CD8-positive, alpha-beta T cell (primary cell): ENCODE measurements at regions of chrX and their contacts with region 1.

Region 1: GRCh38 chrX:71532753-71533425 is at the start of gene OGT:
- DNase-seq: peak; percentile 84 to 98 (median 93)
- ATAC-seq: peak; percentile 70
- H3K4me3 ChIP-seq: peak within 1 kb of the TSS; percentile 71 to 90
- H3K4me3 Mint-ChIP-seq: peak within 1 kb of the TSS; percentile 98
- H3K27ac ChIP-seq: peak within 1 kb of the TSS; percentile 92 to 98
- H3K27ac Mint-ChIP-seq: peak within 1 kb of the TSS; percentile 98
- H3K4me1 ChIP-seq: peaks cover 15% of the 10 kb centered on the region
- H3K4me1 Mint-ChIP-seq: peaks cover 36% of the 10 kb centered on the region
- H3K27me3 ChIP-seq: no peaks in the 10 kb centered on the region
- H3K27me3 Mint-ChIP-seq: no peaks in the 10 kb centered on the region
- CTCF ChIP-seq: no peak
- total RNA-seq, gene OGT: 295 to 297 TPM

Region 2: DNA sequence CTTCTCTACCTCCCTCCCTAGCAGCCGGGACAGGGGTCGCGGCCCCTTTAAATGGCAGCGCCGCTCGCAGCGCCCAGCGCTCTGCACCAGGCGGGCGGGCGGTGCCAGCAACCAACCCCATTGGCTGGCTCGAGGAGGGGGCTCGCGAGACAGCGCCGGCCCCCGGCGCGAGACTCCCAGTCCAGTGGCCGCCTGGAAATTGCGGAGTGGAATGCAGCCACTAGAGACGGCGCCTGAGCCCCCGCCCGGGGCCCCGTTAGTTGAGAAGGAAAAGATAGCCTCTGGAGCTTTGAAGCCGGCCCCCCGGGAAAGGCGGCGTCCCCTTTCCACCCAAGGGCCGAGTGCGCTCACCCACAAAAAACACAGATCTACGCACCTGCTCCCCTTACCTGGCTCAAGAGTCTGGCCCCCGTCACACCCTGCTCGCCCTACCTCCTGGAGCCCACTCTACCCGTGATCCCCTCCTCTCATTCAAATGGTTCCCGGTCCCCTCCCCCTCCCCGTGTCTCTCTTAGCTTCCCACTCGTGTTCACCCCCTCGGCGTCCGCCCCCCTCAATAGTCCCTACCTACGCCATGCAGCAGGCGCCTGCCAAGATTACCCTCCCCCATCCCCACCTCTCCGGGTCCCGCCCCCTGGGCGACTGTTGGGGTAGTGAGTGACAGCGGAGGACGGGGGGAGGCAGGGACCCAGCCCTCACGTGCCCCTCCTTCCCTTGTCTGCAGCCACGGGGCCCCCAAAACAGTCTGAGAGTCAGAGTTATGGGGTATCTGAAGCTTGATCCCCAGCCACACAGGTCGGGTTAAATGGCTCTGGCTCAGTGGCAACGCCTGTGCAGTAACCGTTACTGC is 278.6 kb before region 1 on chrX and contains the start of gene ZMYM3:
- CTCF ChIA-PET with region 1: no interaction called
- POLR2A ChIA-PET with region 1: interaction called, 5 read pairs
- intact Hi-C with region 1: loop called in 1 of 2 experiments (anchors 10 kb)
- DNase-seq: peak; percentile 50 to 91 (median 80)
- ATAC-seq: peak; percentile 79
- H3K4me3 ChIP-seq: peak within 1 kb of the TSS; percentile 79 to 84
- H3K4me3 Mint-ChIP-seq: peak within 1 kb of the TSS; percentile 94
- H3K27ac ChIP-seq: peak within 1 kb of the TSS; percentile 85 to 87
- H3K27ac Mint-ChIP-seq: peak within 1 kb of the TSS; percentile 92
- H3K4me1 ChIP-seq: peaks cover 28% of the 10 kb centered on the region
- H3K4me1 Mint-ChIP-seq: peaks cover 26% of the 10 kb centered on the region
- H3K27me3 ChIP-seq: no peaks in the 10 kb centered on the region
- H3K27me3 Mint-ChIP-seq: no peaks in the 10 kb centered on the region
- CTCF ChIP-seq: no peak
- total RNA-seq, gene ZMYM3: 12.2 to 13.2 TPM

Region 3: GRCh38 chrX:71365876-71366673 is 166.8 kb before region 1 on chrX and contains the start of gene TAF1:
- CTCF ChIA-PET with region 1: no interaction called
- POLR2A ChIA-PET with region 1: interaction called, 35 read pairs
- intact Hi-C with region 1: loop called in 1 of 2 experiments (anchors 1 kb)
- DNase-seq: peak; percentile 76 to 97 (median 88)
- ATAC-seq: peak; percentile 86
- H3K4me3 ChIP-seq: peak within 1 kb of the TSS; percentile 85 to 95
- H3K4me3 Mint-ChIP-seq: peak within 1 kb of the TSS; percentile 98
- H3K27ac ChIP-seq: peak within 1 kb of the TSS; percentile 87 to 91
- H3K27ac Mint-ChIP-seq: peak within 1 kb of the TSS; percentile 100
- H3K4me1 ChIP-seq: peaks cover 14% of the 10 kb centered on the region
- H3K4me1 Mint-ChIP-seq: peaks cover 28% of the 10 kb centered on the region
- H3K27me3 ChIP-seq: no peaks in the 10 kb centered on the region
- H3K27me3 Mint-ChIP-seq: no peaks in the 10 kb centered on the region
- CTCF ChIP-seq: no peak
- total RNA-seq, gene TAF1: 48.2 to 61.3 TPM

Region 4: DNA sequence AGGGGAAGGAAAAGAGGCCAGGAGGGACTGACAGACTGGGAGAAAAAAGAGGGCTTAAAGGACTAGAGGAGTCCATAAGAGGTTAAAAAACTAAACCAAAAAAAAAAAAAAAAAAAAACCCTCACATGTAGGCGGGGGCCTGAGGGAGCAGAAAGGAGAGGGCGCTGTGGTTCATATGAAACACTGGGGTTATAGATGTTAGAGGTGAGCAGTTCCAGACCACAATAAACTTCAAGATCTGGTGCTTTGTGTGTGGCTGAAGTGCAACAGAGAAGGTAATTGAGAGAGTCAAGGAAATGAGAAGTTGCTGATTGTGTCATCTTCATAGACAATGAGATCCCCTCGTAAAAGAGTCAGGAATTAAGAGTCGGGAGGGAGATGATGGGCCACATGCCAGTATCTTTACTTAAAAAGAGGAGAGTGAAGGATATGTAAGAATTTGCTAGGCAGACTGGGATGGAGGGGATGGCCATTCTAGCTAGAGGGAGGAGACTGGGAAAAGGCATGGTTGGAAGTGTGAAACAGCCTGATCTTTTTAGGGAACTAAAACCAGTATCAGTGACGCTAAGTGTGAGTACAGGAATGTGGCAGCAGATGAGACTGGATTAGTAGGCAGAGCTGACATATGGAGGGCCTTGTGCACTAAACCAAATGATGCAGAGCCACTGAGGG is 18.4 kb before region 1 on chrX:
- CTCF ChIA-PET with region 1: interaction called, 4 read pairs
- POLR2A ChIA-PET with region 1: interaction called, 12 read pairs
- intact Hi-C with region 1: loop called (anchors 1 to 2 kb)
- DNase-seq: peak in 5 of 9 experiments; percentile 35 to 80 (median 69)
- ATAC-seq: peak; percentile 99
- H3K4me3 ChIP-seq: no peak overlapping the region
- H3K4me3 Mint-ChIP-seq: no peak overlapping the region
- H3K27ac ChIP-seq: no peak overlapping the region
- H3K27ac Mint-ChIP-seq: peak overlapping the region; percentile 80
- H3K4me1 ChIP-seq: peaks cover 13% of the 10 kb centered on the region
- H3K4me1 Mint-ChIP-seq: peaks cover 17% of the 10 kb centered on the region
- H3K27me3 ChIP-seq: no peaks in the 10 kb centered on the region
- H3K27me3 Mint-ChIP-seq: no peaks in the 10 kb centered on the region
- CTCF ChIP-seq: no peak

Region 5: GRCh38 chrX:71550578-71550977 is 17.7 kb after region 1 on chrX:
- CTCF ChIA-PET with region 1: interaction called, 13 read pairs
- POLR2A ChIA-PET with region 1: interaction called, 26 read pairs
- intact Hi-C with region 1: no loop called
- DNase-seq: no peak
- ATAC-seq: no peak
- H3K4me3 ChIP-seq: no peak overlapping the region
- H3K4me3 Mint-ChIP-seq: no peak overlapping the region
- H3K27ac ChIP-seq: no peak overlapping the region
- H3K27ac Mint-ChIP-seq: peak overlapping the region; percentile 10
- H3K4me1 ChIP-seq: peaks cover 2% of the 10 kb centered on the region
- H3K4me1 Mint-ChIP-seq: peaks cover 35% of the 10 kb centered on the region
- H3K27me3 ChIP-seq: no peaks in the 10 kb centered on the region
- H3K27me3 Mint-ChIP-seq: no peaks in the 10 kb centered on the region
- CTCF ChIP-seq: no peak